ENCODE measurements at regions of chr2 and their contacts with region 1.

Region 1: GRCh38 chr2:200888704-200889625 is at the starts of genes NIF3L1 and PPIL3:
- DNase-seq: peak; percentile 91 to 98
- H3K4me3 ChIP-seq: peak within 1 kb of the TSS; percentile 79 to 81
- H3K27ac ChIP-seq: peak within 1 kb of the TSS; percentile 90 to 94
- H3K4me1 ChIP-seq: peaks cover 7 to 17% of the 10 kb centered on the region in 2 donors
- H3K27me3 ChIP-seq: no peaks in the 10 kb centered on the region
- CTCF ChIP-seq: peak in 1 of 3 experiments; percentile 15
- total RNA-seq, gene NIF3L1: 55.3 TPM
- total RNA-seq, gene PPIL3: 0.64 TPM

Region 2: GRCh38 chr2:200525882-200526651 is 362.9 kb before region 1 on chr2 and contains the start of gene SGO2:
- intact Hi-C with region 1: loop called (anchors 1 kb)
- DNase-seq: peak; percentile 70 to 97
- H3K4me3 ChIP-seq: peak within 1 kb of the TSS; percentile 63 to 69
- H3K27ac ChIP-seq: no peak within 1 kb of the TSS
- H3K4me1 ChIP-seq: peaks cover 0 to 6% of the 10 kb centered on the region in 2 donors
- H3K27me3 ChIP-seq: no peaks in the 10 kb centered on the region
- CTCF ChIP-seq: no peak
- total RNA-seq, gene SGO2: 0.96 TPM

Region 3: DNA sequence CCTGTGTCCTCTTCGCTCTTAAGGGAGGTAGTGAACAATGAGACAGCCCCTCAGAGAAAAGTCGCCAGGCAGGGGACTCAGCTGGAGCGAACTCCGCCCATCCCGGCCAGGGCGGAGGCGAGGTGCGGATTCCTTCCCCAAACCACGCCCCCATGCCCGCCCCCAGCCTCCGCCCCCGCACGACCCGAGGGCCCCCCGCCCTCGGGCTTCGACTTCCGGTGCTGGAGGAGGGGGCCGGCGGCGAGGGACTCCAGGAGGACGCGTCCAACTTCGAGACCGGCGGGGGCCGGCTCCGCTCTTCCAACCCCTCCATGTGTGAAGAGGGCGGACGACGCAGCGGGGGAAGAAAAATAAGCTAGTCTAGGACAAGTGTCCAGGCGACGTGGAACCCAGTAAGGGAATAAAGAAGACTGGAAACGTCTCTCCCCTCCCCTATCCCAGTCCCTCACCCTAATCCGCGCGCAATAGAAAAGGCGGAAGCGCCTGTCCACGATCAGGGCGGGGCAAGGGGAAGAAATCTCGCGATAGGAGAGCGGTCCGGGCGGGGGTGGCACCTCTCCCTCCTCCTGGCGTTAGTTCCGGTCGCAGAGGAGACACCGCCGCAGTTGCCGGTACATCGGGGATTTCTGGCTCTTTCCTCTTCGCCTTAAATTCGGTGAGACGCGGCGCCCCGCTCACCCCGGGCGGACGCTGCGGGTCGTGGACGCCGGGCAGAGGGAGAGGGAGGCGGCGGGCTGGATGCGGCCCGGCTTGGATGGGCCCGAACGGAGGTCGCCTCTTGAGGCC is 77.4 kb before region 1 on chr2 and contains the start of gene BZW1:
- intact Hi-C with region 1: loop called (anchors 2 kb)
- DNase-seq: peak; percentile 77 to 96
- H3K4me3 ChIP-seq: peak within 1 kb of the TSS; percentile 81 to 97
- H3K27ac ChIP-seq: peak within 1 kb of the TSS; percentile 98
- H3K4me1 ChIP-seq: peaks cover 6 to 40% of the 10 kb centered on the region in 2 donors
- H3K27me3 ChIP-seq: no peaks in the 10 kb centered on the region
- CTCF ChIP-seq: no peak
- total RNA-seq, gene BZW1: 85.4 TPM

Region 4: GRCh38 chr2:200963124-200963917 is 74.4 kb after region 1 on chr2 and contains the start of gene ORC2:
- intact Hi-C with region 1: loop called (anchors 5 kb)
- DNase-seq: peak; percentile 78 to 97
- H3K4me3 ChIP-seq: peak within 1 kb of the TSS; percentile 85 to 86
- H3K27ac ChIP-seq: peak within 1 kb of the TSS; percentile 71 to 82
- H3K4me1 ChIP-seq: peaks cover 0 to 8% of the 10 kb centered on the region in 2 donors
- H3K27me3 ChIP-seq: no peaks in the 10 kb centered on the region
- CTCF ChIP-seq: peak; percentile 44 to 73 (median 50)
- total RNA-seq, gene ORC2: 5.2 TPM

Region 5: GRCh38 chr2:201118121-201118960 is 229.4 kb after region 1 on chr2:
- intact Hi-C with region 1: loop called (anchors 5 kb)
- DNase-seq: peak; percentile 55 to 91
- H3K4me3 ChIP-seq: peak overlapping the region; percentile 77 to 85
- H3K27ac ChIP-seq: peak overlapping the region; percentile 99
- H3K4me1 ChIP-seq: peaks cover 3 to 16% of the 10 kb centered on the region in 2 donors
- H3K27me3 ChIP-seq: no peaks in the 10 kb centered on the region
- CTCF ChIP-seq: peak in 2 of 3 experiments; percentile 3 to 53